Aorta (tissue), 5 donors: ENCODE measurements at regions of chr22 and their contacts with region 1.

Region 1: DNA sequence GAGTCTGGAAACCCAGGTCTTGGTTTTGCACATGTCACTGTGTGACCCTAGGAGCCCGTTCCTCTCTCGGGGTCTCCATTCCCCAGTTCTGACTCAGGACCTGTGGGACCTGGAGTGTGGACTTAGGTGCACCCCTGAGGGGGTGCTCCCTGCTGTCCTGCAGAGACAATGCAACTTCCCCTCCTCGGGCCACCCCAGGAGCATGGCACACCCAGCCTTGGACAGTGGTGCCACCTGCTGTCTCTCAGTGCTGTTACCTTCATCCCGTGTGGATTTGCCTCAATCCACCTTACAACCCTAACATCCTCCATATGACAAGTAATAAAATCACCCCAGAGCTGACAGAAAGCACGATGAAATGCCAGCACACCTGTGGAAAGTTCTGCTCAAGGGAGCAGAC is 27.5 kb upstream of the CRYBB3 start:
- DNase-seq: no peak
- ATAC-seq: no peak
- H3K4me3 ChIP-seq: no peak overlapping the region
- H3K27ac ChIP-seq: no peak overlapping the region
- H3K4me1 ChIP-seq: no peaks in the 10 kb centered on the region
- H3K27me3 ChIP-seq: no peaks in the 10 kb centered on the region

Region 2: DNA sequence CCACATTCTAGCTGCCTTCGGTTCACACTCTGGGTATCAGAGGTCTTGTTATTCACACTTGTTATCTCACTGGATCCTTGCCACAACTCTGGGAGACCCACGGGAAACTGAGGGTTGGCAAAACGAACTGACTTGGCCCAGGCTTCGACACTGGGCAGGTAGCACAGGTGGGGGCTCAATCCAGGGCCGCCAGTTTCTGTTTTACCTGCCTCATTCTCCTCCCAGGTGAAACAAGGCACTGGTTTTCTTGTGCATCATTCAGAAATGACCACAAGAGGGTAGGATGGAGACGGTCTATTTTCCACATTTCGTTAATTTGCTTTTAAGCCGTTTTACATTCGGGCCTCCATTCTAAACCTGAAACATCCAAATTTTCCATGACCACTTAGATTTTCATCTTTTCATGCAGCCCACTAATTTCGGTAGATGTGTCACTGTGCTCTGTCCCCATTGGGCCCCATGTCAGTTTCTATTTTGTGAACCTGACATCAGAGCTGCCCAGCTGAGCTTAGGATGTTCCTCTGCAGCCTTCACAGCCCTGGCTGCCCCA is 111.6 kb before region 1 on chr22:
- intact Hi-C with region 1: loop called in 1 of 2 experiments (anchors 5 kb)
- DNase-seq: no peak
- ATAC-seq: no peak
- H3K4me3 ChIP-seq: no peak overlapping the region
- H3K27ac ChIP-seq: no peak overlapping the region
- H3K4me1 ChIP-seq: no peaks in the 10 kb centered on the region
- H3K27me3 ChIP-seq: no peaks in the 10 kb centered on the region

Region 3: GRCh38 chr22:25081409-25081824 is 90.7 kb before region 1 on chr22:
- intact Hi-C with region 1: loop called in 1 of 2 experiments (anchors 5 kb)
- DNase-seq: no peak
- ATAC-seq: no peak
- H3K4me3 ChIP-seq: no peak overlapping the region
- H3K27ac ChIP-seq: peak overlapping the region in 1 of 2 donors; percentile 90
- H3K4me1 ChIP-seq: peaks cover 0 to 6% of the 10 kb centered on the region in 2 donors
- H3K27me3 ChIP-seq: no peaks in the 10 kb centered on the region